ENCODE measurements at regions of chrX and their contacts with region 1.

Region 1: DNA sequence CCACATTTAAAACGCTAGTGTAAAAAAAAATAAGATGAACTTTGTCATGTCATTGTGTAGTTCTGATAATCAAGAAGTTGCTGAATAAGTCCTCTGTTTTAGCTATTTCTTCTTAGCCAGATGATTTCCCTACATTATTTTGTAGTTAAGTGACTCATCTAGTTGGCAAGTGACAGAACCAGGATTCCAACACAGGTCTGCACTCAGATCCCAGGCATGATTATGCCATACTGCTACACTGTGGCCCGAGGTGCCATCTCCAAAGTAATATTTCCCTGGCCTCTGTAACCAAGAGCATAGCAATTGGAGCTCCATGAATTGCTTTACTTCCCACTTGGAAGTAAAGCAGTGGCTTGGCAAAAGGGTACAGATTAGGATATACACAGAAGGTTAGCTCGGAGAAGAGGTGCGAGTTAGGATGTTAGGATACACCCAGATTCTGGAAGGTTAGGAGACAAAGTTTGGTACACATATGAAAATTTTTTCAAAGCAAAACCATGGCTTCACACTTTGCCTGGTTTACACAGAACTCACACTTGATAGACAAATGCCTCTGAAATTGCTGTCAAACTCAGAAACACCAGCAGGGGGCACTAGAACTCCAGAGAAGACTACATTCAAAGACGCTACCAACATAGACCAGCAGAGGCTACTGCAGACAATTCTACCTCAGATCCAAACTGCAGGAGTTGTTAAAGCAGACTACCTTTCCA is 41.4 kb downstream of the SRPX2 start:
- DNase-seq: peak; percentile 55 to 78
- ATAC-seq: peak; percentile 95 to 98
- H3K4me3 ChIP-seq: no peak overlapping the region
- H3K27ac ChIP-seq: no peak overlapping the region
- H3K4me1 ChIP-seq: no peaks in the 10 kb centered on the region
- CTCF ChIP-seq: peak; percentile 92
- EP300 ChIP-seq: no peak
- POLR2A ChIP-seq: no peak
- RAD21 ChIP-seq: peak; percentile 92 to 94

Region 2: DNA sequence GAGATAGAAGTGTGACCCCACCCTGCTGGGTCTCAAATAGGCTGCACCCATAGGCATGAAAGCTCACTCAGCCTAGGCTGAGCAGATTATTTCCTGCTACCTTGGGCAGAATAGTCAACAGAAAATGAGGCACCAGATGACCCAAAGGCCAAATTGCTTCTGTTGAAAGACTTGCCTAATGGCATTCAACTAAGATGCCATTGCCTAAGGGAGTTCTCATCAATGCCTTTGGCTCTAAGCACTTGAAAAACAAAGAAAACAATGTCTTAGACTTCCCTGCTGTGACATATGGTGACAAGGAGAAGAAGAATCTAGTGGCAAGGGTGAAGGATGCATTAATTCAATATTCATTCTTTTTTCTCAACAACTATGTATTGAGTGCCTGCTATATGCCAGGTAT is 249.7 kb before region 1 on chrX:
- CTCF ChIA-PET with region 1: no interaction called
- POLR2A ChIA-PET with region 1: no interaction called
- DNase-seq: no peak
- ATAC-seq: no peak
- H3K4me3 ChIP-seq: no peak overlapping the region
- H3K27ac ChIP-seq: no peak overlapping the region
- H3K4me1 ChIP-seq: no peaks in the 10 kb centered on the region
- CTCF ChIP-seq: no peak
- EP300 ChIP-seq: no peak
- POLR2A ChIP-seq: no peak
- RAD21 ChIP-seq: no peak

Region 3: GRCh38 chrX:100717363-100717762 is 31.9 kb after region 1 on chrX:
- CTCF ChIA-PET with region 1: interaction called, 10 read pairs
- POLR2A ChIA-PET with region 1: no interaction called
- DNase-seq: no peak
- ATAC-seq: no peak
- H3K4me3 ChIP-seq: no peak overlapping the region
- H3K27ac ChIP-seq: no peak overlapping the region
- H3K4me1 ChIP-seq: peaks cover 6% of the 10 kb centered on the region; the same call in 2 of the 3 replicates
- CTCF ChIP-seq: no peak
- EP300 ChIP-seq: no peak
- POLR2A ChIP-seq: no peak
- RAD21 ChIP-seq: no peak

Region 4: DNA sequence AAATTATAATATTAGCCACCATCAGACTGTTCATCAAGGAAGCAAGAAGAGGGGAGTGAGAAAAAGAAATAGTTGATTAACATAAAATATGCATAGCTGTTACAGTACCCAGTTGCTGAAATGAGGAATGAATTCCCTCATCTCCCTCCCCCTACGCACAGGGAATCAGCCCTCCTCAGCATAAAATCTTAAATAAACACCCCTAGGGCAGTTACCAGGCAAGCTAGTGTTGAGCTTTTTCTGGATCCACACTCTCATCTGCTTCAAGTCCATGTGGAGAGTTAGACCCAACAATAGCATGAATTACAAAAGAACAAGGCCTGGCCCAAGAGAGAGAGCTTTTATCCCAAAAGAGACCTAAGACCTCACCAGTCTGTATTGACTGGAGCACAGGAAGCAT is 65.4 kb after region 1 on chrX:
- CTCF ChIA-PET with region 1: interaction called, 13 read pairs
- POLR2A ChIA-PET with region 1: no interaction called
- DNase-seq: no peak
- ATAC-seq: no peak
- H3K4me3 ChIP-seq: no peak overlapping the region
- H3K27ac ChIP-seq: no peak overlapping the region
- H3K4me1 ChIP-seq: no peaks in the 10 kb centered on the region
- CTCF ChIP-seq: no peak
- EP300 ChIP-seq: no peak
- POLR2A ChIP-seq: no peak
- RAD21 ChIP-seq: no peak